ENCODE measurements at regions of chr5 and their contacts with region 1.

Region 1: DNA sequence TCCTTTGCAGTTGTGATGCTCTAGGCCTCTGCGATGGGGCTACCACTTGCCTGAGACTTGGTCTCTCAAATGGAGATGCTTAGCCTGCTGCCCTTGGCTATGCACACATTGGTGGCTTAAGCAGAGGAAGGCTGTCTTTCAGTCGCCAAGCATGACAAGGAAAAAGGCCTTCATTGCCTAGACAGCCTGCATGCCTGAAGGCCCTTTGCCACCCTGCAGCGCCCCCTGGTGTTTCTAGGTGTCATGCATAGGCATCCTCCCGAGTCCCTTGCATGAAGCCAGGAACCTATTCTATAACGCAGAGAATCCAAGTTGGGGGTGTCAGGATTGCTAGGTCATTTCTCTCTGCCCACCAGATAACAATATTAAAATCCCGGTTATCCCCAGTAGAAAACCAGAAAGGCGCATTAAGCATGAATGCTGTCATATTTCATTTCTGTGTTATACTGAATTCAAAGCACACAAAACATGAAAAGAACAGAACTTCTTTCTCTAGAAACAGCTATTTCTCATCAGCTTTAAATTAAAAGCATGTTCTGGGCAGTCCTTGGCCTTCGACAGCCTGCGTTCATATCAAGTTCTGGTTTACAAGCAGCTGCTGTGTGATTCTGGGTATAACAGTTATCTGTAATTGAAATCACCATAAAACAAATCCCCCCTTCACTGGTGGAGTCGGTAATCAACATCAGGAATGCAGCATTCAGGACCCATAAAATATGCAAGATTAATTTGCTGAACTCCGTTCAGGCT is 59.7 kb upstream of the TRPC7 start:
- DNase-seq: peak; percentile 90
- H3K4me3 Mint-ChIP-seq: no peak overlapping the region
- H3K27ac Mint-ChIP-seq: no peak overlapping the region
- H3K4me1 Mint-ChIP-seq: no peaks in the 10 kb centered on the region
- H3K27me3 Mint-ChIP-seq: peaks cover 75% of the 10 kb centered on the region
- CTCF ChIP-seq: peak; percentile 94

Region 2: DNA sequence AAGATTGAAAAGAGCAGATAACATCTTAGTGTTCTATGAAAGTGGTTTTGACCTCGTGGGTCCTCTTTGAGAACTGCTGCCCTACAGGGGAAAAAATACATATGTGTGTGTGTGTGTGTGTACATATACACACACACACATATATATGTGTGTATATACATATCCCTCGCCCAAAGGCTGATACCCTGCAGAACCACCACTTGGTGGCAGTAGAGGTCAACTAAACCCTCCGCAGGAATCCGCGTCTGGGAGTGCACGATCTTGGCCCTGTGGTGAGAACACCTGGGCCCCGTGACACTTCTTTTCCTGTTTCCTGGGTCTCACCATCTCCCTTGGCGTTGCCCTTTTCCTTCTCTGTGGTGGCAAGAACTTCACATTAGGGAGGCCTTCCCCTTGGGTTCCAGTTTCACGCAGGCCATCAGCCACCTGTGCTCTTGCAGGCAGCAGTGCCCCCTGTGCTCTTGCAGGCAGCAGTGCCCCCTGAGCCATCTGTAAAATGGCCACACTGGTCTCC is 537.6 kb before region 1 on chr5:
- CTCF ChIA-PET with region 1: no interaction called
- POLR2A ChIA-PET with region 1: no interaction called
- intact Hi-C with region 1: loop called (anchors 1 kb)
- DNase-seq: peak; percentile 90
- H3K4me3 Mint-ChIP-seq: no peak overlapping the region
- H3K27ac Mint-ChIP-seq: no peak overlapping the region
- H3K4me1 Mint-ChIP-seq: no peaks in the 10 kb centered on the region
- H3K27me3 Mint-ChIP-seq: peaks cover 37% of the 10 kb centered on the region
- CTCF ChIP-seq: peak; percentile 96

Region 3: GRCh38 chr5:136364307-136364706 is 60.7 kb before region 1 on chr5:
- CTCF ChIA-PET with region 1: interaction called, 7 read pairs
- POLR2A ChIA-PET with region 1: no interaction called
- intact Hi-C with region 1: loop called (anchors 2 kb)
- DNase-seq: peak; percentile 27
- H3K4me3 Mint-ChIP-seq: no peak overlapping the region
- H3K27ac Mint-ChIP-seq: no peak overlapping the region
- H3K4me1 Mint-ChIP-seq: no peaks in the 10 kb centered on the region
- H3K27me3 Mint-ChIP-seq: peaks cover 31% of the 10 kb centered on the region
- CTCF ChIP-seq: peak; percentile 51

Region 4: DNA sequence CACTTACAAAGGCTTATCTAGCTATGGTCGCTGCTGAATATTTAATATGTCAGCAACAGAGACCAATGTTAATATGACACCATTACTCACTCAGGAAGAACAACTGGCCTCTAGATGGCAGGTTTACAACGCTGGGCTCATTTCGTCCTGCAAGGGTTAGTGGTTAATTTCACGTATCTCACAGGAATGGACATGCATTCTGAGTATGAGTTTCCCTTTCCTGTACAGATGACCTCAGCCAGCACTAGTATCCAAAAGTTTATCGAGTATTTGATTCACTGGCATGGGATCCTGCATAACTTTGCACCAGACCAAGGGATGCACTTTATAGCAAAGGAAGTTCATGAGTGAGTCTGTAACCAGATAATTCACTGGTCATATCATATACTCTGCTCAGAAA is 51.0 kb before region 1 on chr5:
- CTCF ChIA-PET with region 1: interaction called, 3 read pairs
- POLR2A ChIA-PET with region 1: no interaction called
- intact Hi-C with region 1: loop called (anchors 1 kb)
- DNase-seq: peak; percentile 62
- H3K4me3 Mint-ChIP-seq: no peak overlapping the region
- H3K27ac Mint-ChIP-seq: no peak overlapping the region
- H3K4me1 Mint-ChIP-seq: no peaks in the 10 kb centered on the region
- H3K27me3 Mint-ChIP-seq: peaks cover 50% of the 10 kb centered on the region
- CTCF ChIP-seq: peak; percentile 23

Region 5: DNA sequence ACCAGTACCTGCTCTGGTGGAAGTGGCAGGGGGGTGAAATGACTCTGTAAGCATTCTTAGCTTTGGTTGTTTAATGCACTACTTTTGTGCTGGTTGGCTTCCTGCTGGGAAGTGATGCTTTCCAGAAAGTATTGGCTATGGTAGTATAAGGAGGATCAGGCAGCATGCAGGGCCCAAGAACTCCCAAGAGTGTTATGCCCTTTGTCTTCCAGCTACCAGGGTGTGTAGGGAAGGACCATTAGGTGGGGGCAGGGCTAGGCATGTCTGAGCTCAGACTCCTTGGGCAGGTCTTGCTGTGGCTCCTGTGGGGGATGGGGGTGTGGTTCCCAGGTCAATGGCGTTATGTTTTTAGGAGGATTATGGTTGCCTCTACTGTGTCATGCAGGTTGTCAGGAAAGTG is 76.1 kb after region 1 on chr5:
- CTCF ChIA-PET with region 1: no interaction called
- POLR2A ChIA-PET with region 1: no interaction called
- intact Hi-C with region 1: no loop called
- DNase-seq: no peak
- H3K4me3 Mint-ChIP-seq: no peak overlapping the region
- H3K27ac Mint-ChIP-seq: no peak overlapping the region
- H3K4me1 Mint-ChIP-seq: no peaks in the 10 kb centered on the region
- H3K27me3 Mint-ChIP-seq: peaks cover 19% of the 10 kb centered on the region
- CTCF ChIP-seq: no peak

Region 6: GRCh38 chr5:136769900-136770684 is 345.1 kb after region 1 on chr5:
- CTCF ChIA-PET with region 1: no interaction called
- POLR2A ChIA-PET with region 1: no interaction called
- intact Hi-C with region 1: loop called (anchors 1 kb)
- DNase-seq: peak; percentile 89
- H3K4me3 Mint-ChIP-seq: no peak overlapping the region
- H3K27ac Mint-ChIP-seq: no peak overlapping the region
- H3K4me1 Mint-ChIP-seq: peaks cover 5% of the 10 kb centered on the region
- H3K27me3 Mint-ChIP-seq: peaks cover 49% of the 10 kb centered on the region
- CTCF ChIP-seq: peak; percentile 96